AG04449 (cell line): ENCODE measurements at regions of chr16 and their contacts with region 1.

Region 1: GRCh38 chr16:79601931-79602627 is 1.5 kb upstream of the MAF start:
- DNase-seq: no peak
- H3K4me3 ChIP-seq: no peak overlapping the region
- CTCF ChIP-seq: peak; percentile 62

Region 2: GRCh38 chr16:78125112-78125844 is 1476.8 kb before region 1 on chr16:
- CTCF ChIA-PET with region 1: interaction called, 12 read pairs
- POLR2A ChIA-PET with region 1: no interaction called
- DNase-seq: no peak
- H3K4me3 ChIP-seq: no peak overlapping the region
- CTCF ChIP-seq: no peak

Region 3: GRCh38 chr16:79573071-79573470 is 29.0 kb before region 1 on chr16:
- CTCF ChIA-PET with region 1: no interaction called
- POLR2A ChIA-PET with region 1: no interaction called
- DNase-seq: no peak
- H3K4me3 ChIP-seq: no peak overlapping the region
- CTCF ChIP-seq: no peak